ENCODE measurements at regions of chr20 and their contacts with region 1.

Region 1: GRCh38 chr20:50286609-50287008 is 96.0 kb downstream of the CEBPB start:
- DNase-seq: no peak
- H3K4me3 ChIP-seq: no peak overlapping the region
- H3K27ac ChIP-seq: no peak overlapping the region
- H3K4me1 ChIP-seq: peaks cover 0 to 6% (median 2%) of the 10 kb centered on the region in 4 experiments; a peak in 2 of 7 replicates
- H3K27me3 ChIP-seq: no peaks in the 10 kb centered on the region
- CTCF ChIP-seq: no peak
- EP300 ChIP-seq: no peak
- POLR2A ChIP-seq: no peak
- RAD21 ChIP-seq: no peak

Region 2: GRCh38 chr20:49888345-49888966 is 398.2 kb before region 1 on chr20:
- CTCF ChIA-PET with region 1: no interaction called
- POLR2A ChIA-PET with region 1: no interaction called
- DNase-seq: peak; percentile 76 to 94
- H3K4me3 ChIP-seq: no peak overlapping the region
- H3K27ac ChIP-seq: no peak overlapping the region
- H3K4me1 ChIP-seq: peaks cover 0 to 19% (median 11%) of the 10 kb centered on the region in 4 experiments; a peak in 5 of 7 replicates
- H3K27me3 ChIP-seq: no peaks in the 10 kb centered on the region
- CTCF ChIP-seq: peak; percentile 70 to 91 (median 88)
- EP300 ChIP-seq: no peak
- POLR2A ChIP-seq: no peak
- RAD21 ChIP-seq: peak; percentile 92

Region 3: GRCh38 chr20:50153485-50154377 is 132.9 kb before region 1 on chr20 and contains the start of gene PEDS1:
- CTCF ChIA-PET with region 1: no interaction called
- POLR2A ChIA-PET with region 1: no interaction called
- DNase-seq: peak in 1 of 2 experiments; percentile 87
- H3K4me3 ChIP-seq: peak within 1 kb of the TSS; percentile 61 to 98 (median 86)
- H3K27ac ChIP-seq: peak within 1 kb of the TSS; percentile 26; the same call in 1 of the 2 replicates
- H3K4me1 ChIP-seq: peaks cover 9 to 27% (median 16%) of the 10 kb centered on the region in 4 experiments
- H3K27me3 ChIP-seq: peaks cover 0 to 3% (median under 1%) of the 10 kb centered on the region in 4 experiments; a peak in 2 of 7 replicates
- CTCF ChIP-seq: no peak
- EP300 ChIP-seq: no peak
- POLR2A ChIP-seq: peak; percentile 70 to 75
- RAD21 ChIP-seq: no peak
- total RNA-seq, gene PEDS1: 28.9 and 33.3 TPM in 2 replicates

Region 4: DNA sequence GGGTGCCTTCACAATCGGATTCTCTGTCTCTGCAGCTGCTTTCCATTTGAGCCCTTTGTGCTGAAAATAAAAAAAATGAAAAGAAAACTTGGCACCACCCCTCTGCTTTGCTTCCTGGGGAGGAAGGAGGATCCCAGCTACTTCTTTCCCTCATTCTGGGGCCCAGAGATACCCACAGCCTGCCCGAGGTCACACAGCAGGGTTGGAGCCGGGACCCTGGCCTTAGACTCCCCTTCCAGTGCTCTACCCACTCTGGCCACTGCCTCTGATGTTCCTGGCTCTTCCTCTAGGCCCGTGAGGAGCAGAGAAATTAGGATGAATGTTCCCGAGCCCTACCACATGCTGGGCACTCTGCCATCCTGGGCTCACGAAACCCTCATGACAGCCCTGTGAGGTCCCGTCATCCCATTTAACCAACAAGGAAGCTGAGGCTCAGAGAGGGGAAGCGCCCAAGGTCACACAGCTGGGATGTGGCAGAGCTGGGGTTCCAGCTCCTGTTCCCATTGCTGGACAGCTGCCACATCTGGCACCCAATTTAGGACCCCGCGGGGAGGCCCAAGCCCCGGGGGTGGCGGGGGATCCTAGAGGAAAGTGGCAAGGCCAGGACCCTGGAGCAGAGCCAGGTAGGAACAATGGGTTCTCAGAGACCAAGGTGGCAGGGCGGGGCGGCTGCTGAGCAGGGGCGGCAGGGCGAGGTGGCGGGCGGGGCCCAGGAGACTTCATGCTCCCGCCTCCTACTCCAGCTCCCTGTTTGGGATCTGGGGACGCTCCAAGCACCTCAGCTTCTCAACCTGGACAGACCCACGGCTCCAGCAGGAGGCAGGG is 19.4 kb before region 1 on chr20:
- CTCF ChIA-PET with region 1: interaction called, 48 read pairs
- POLR2A ChIA-PET with region 1: no interaction called
- DNase-seq: peak in 1 of 2 experiments; percentile 72
- H3K4me3 ChIP-seq: peak overlapping the region in 1 of 4 experiments; percentile 4; a peak in 1 of 8 replicates
- H3K27ac ChIP-seq: no peak overlapping the region
- H3K4me1 ChIP-seq: peaks cover 4 to 9% (median 8%) of the 10 kb centered on the region in 4 experiments; a peak in 6 of 7 replicates
- H3K27me3 ChIP-seq: no peaks in the 10 kb centered on the region
- CTCF ChIP-seq: no peak
- EP300 ChIP-seq: no peak
- POLR2A ChIP-seq: no peak
- RAD21 ChIP-seq: no peak

Measured in H1 (cell line).